HepG2 (cell line): ENCODE measurements at regions of chr2 and their contacts with region 1.

Region 1: DNA sequence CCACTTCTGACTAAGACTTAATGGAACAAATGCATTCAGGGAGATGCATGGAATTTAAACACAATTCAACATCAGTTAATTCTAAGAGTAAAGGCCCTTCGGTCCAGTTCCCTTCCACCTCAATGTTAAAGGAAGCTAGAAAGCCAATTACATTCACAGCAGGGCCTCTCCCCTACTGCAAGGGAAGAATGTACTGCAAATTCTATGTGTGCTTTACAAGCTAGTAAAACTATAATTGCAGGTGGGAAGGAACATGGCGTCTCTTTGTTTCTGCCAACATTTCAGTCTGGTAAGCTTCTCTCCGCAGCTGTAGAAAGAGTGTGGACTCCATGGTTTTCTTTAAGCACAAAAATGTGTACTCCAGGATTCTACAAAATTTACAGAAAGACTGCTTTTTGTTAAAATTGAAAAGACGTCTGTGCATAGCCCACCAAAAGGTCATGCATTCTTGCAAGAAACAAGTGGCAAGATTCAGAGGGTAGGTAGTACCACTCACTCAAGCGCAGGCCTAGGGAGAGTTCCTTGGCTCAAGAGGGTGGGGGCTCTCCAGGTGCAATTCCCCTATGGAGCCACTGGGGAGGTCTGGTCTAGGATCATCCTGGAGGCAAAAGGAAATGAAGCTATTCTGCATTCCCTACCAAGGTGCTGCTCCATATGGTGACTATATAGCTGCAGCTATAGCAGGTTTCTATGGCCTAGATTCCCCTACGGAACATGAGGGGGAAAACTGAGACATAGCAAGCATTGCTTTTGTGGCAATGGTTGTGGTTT is 127.0 kb upstream of the FZD5 start:
- DNase-seq: peak; percentile 46
- ATAC-seq: peak; percentile 81
- H3K4me3 ChIP-seq: no peak overlapping the region; a peak in 1 of 6 replicates
- H3K27ac ChIP-seq: peak overlapping the region; percentile 88
- H3K4me1 ChIP-seq: peaks cover 81% of the 10 kb centered on the region
- H3K27me3 ChIP-seq: no peaks in the 10 kb centered on the region
- CTCF ChIP-seq: peak; percentile 30; the same call in 1 of the 2 replicates
- EP300 ChIP-seq: no peak
- POLR2A ChIP-seq: no peak
- RAD21 ChIP-seq: no peak

Region 2: DNA sequence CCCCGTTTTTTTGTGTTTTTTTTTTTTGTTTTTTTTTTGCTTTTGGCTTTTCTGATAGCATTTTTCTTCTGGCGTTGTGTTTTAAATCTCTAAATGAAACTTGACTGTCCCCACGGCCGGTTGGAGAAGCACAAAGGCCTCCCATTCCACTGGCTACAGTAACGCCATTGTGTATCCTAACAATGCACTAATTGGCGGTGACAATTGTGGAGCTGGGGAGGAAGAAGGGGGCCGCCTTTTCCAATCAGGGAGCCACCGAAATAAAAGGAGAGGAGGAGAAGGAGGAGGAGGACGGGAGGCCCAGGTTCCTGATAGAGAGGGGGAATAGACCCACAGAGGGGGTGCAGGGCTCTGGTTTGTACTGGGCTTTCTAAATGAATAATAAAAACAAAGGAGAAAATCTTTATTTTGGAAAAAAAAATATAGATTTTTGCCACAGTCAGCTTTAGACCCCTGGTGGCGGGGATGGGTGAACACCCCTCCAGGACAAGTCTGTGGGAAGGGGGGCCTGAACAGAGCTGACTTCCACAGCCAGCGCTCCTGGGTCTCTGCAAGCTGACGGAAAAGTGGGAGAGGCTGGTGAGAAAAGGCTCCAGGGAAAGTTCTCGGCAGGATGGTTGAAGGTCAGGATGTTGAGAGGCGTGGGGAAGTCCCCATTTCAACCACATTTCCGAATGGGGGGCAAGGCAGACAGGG is 83.3 kb before region 1 on chr2:
- CTCF ChIA-PET with region 1: no interaction called
- POLR2A ChIA-PET with region 1: interaction called, 19 read pairs
- in situ Hi-C with region 1: no loop called
- intact Hi-C with region 1: no loop called
- DNase-seq: no peak
- ATAC-seq: 0 out of 3 replicates have a peak, but pooled peaks have one; percentile 6
- H3K4me3 ChIP-seq: no peak overlapping the region
- H3K27ac ChIP-seq: no peak overlapping the region
- H3K4me1 ChIP-seq: peaks cover 88% of the 10 kb centered on the region
- H3K27me3 ChIP-seq: no peaks in the 10 kb centered on the region
- CTCF ChIP-seq: no peak; the same call in 1 of the 2 replicates
- EP300 ChIP-seq: no peak
- POLR2A ChIP-seq: no peak
- RAD21 ChIP-seq: 0 out of 2 replicates have a peak, but pooled peaks have one; percentile 12

Region 3: GRCh38 chr2:207833251-207833751 is 63.4 kb before region 1 on chr2:
- CTCF ChIA-PET with region 1: no interaction called
- POLR2A ChIA-PET with region 1: interaction called, 34 read pairs
- in situ Hi-C with region 1: no loop called
- intact Hi-C with region 1: no loop called
- DNase-seq: peak; percentile 87
- ATAC-seq: peak; percentile 33
- H3K4me3 ChIP-seq: no peak overlapping the region
- H3K27ac ChIP-seq: peak overlapping the region; percentile 16
- H3K4me1 ChIP-seq: peaks cover 80% of the 10 kb centered on the region
- H3K27me3 ChIP-seq: no peaks in the 10 kb centered on the region
- CTCF ChIP-seq: no peak
- EP300 ChIP-seq: no peak; a peak in 1 of 4 replicates
- POLR2A ChIP-seq: no peak
- RAD21 ChIP-seq: no peak

Region 4: GRCh38 chr2:207879536-207879935 is 17.2 kb before region 1 on chr2:
- CTCF ChIA-PET with region 1: no interaction called
- POLR2A ChIA-PET with region 1: interaction called, 21 read pairs
- in situ Hi-C with region 1: no loop called
- intact Hi-C with region 1: no loop called
- DNase-seq: peak; percentile 80
- ATAC-seq: peak; percentile 95
- H3K4me3 ChIP-seq: no peak overlapping the region
- H3K27ac ChIP-seq: peak overlapping the region; percentile 25
- H3K4me1 ChIP-seq: peaks cover 52% of the 10 kb centered on the region
- H3K27me3 ChIP-seq: no peaks in the 10 kb centered on the region
- CTCF ChIP-seq: peak; percentile 52
- EP300 ChIP-seq: 0 out of 4 replicates have a peak, but pooled peaks of 1 of the 2 experiments have one; percentile 18
- POLR2A ChIP-seq: no peak
- RAD21 ChIP-seq: no peak

Region 5: GRCh38 chr2:207933396-207934065 is 36.8 kb after region 1 on chr2:
- CTCF ChIA-PET with region 1: no interaction called
- POLR2A ChIA-PET with region 1: interaction called, 37 read pairs
- in situ Hi-C with region 1: no loop called
- intact Hi-C with region 1: loop called (anchors 5 kb)
- DNase-seq: no peak
- ATAC-seq: no peak
- H3K4me3 ChIP-seq: no peak overlapping the region
- H3K27ac ChIP-seq: peak overlapping the region; percentile 9
- H3K4me1 ChIP-seq: peaks cover 63% of the 10 kb centered on the region
- H3K27me3 ChIP-seq: no peaks in the 10 kb centered on the region
- CTCF ChIP-seq: no peak
- EP300 ChIP-seq: no peak
- POLR2A ChIP-seq: no peak
- RAD21 ChIP-seq: no peak

Region 6: GRCh38 chr2:207974216-207974605 is 77.5 kb after region 1 on chr2:
- CTCF ChIA-PET with region 1: no interaction called
- POLR2A ChIA-PET with region 1: interaction called, 3 read pairs
- in situ Hi-C with region 1: no loop called
- intact Hi-C with region 1: loop called (anchors 5 kb)
- DNase-seq: no peak
- ATAC-seq: no peak
- H3K4me3 ChIP-seq: no peak overlapping the region
- H3K27ac ChIP-seq: no peak overlapping the region
- H3K4me1 ChIP-seq: peaks cover 28% of the 10 kb centered on the region
- H3K27me3 ChIP-seq: no peaks in the 10 kb centered on the region
- CTCF ChIP-seq: no peak
- EP300 ChIP-seq: no peak
- POLR2A ChIP-seq: no peak
- RAD21 ChIP-seq: no peak